ENCODE measurements at regions of chr11 and their contacts with region 1.

Region 1: DNA sequence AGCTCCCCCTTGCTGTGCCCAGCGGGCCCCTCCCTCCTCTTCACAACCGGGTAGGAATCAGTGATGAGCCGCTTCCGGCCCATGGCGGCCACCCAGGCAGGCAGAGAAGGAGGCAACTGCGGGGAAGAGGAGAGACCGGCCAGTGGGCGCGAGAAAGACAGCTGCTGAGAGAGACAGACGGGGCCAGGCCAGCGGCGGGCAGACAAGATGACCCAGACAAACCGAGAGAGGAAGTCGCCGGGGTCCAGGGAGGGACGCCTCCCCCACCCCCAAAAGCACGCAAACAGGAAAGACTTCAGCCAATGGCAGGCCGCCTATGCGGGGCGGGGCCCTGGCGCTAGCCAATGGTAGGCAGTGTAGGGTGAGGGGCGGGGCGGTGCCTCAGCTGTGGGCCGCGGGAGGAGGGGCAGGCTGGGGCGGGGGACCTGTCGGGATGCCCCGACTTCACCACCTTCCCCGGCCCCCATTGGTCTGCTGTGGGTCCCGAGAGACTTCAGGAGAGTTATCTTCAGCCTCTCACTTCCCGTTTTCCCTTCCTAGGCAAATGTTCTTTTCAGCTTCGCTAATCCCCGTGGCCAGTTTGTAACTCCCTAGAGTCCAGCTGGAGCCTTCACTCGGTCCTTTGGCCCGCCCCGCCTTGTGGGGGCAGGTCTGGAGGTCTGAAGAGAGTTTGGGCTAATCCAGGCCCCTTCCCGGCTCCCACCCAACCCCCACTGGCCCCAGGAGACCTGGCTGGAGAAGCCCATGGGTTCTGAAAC is at the start of gene POLD4:
- DNase-seq: peak; percentile 92
- H3K4me3 Mint-ChIP-seq: peak within 1 kb of the TSS; percentile 85
- H3K27ac Mint-ChIP-seq: peak within 1 kb of the TSS; percentile 91
- H3K4me1 Mint-ChIP-seq: peaks cover 58% of the 10 kb centered on the region
- H3K27me3 Mint-ChIP-seq: no peaks in the 10 kb centered on the region
- CTCF ChIP-seq: no peak
- total RNA-seq, gene POLD4: 54.8 and 79.9 TPM in 2 replicates

Region 2: DNA sequence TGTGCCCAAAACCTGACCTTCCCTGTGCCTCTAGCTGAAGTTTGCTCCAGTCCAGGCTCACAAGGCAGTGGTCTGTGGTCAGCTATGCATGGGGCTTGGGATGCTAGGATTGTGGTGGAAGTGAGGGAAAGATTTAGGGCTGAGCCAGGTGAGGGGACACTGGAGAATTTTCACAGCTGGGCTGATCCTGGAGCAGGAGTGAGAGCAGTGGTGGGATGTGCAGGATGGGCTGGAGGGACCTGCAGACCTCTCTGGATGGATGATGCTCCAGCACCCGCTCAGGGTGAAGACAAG is 258.3 kb before region 1 on chr11:
- CTCF ChIA-PET with region 1: no interaction called
- POLR2A ChIA-PET with region 1: no interaction called
- intact Hi-C with region 1: no loop called
- DNase-seq: no peak
- H3K4me3 Mint-ChIP-seq: no peak overlapping the region
- H3K27ac Mint-ChIP-seq: no peak overlapping the region
- H3K4me1 Mint-ChIP-seq: peaks cover 5% of the 10 kb centered on the region
- H3K27me3 Mint-ChIP-seq: no peaks in the 10 kb centered on the region
- CTCF ChIP-seq: no peak

Region 3: GRCh38 chr11:67146516-67147226 is 206.8 kb before region 1 on chr11:
- CTCF ChIA-PET with region 1: no interaction called
- POLR2A ChIA-PET with region 1: no interaction called
- intact Hi-C with region 1: no loop called
- DNase-seq: no peak
- H3K4me3 Mint-ChIP-seq: no peak overlapping the region
- H3K27ac Mint-ChIP-seq: no peak overlapping the region
- H3K4me1 Mint-ChIP-seq: peaks cover 6% of the 10 kb centered on the region
- H3K27me3 Mint-ChIP-seq: no peaks in the 10 kb centered on the region
- CTCF ChIP-seq: no peak

Region 4: DNA sequence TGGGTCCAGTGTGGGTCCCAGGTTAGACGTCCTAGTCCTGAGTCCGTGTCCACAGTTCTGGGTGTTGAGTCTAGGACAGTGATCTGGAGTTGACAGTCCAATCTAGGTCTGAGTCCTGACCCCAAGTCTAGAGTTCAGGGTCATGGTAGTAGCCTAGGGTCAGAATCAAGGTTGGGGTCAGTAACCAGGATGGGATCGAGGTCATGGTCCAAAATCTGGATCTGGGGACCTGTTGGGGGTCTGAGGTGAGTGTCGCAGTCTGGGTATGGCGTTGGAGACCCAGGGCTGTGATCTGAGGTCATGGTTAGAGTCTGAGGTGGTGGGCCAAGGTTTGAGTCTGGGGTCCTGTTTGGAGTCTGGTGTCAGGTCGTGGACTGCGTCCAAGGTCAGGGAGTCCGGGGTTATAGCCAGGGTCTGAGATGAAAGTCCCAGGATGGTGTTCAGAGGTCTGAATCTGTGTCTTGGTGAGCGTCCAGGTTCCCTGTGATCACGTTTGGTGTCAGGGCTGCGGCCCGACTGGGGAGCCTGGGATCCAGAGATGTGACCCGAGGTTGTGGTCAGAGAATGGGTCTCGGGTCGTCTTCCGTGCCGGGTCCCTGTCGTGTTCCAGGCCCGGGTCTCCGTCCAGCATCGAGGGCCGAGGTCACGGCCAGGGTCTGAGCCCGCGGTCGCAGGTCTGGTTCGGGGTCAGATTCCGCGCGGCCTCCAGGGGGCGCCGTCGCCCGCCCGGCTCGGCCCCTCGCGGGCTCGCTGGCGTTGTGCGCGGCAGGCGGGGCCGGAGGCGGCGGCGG is 87.7 kb before region 1 on chr11:
- CTCF ChIA-PET with region 1: interaction called, 5 read pairs
- POLR2A ChIA-PET with region 1: interaction called, 12 read pairs
- intact Hi-C with region 1: no loop called
- DNase-seq: peak; percentile 57
- H3K4me3 Mint-ChIP-seq: peak overlapping the region; percentile 93
- H3K27ac Mint-ChIP-seq: peak overlapping the region; percentile 89
- H3K4me1 Mint-ChIP-seq: peaks cover 33% of the 10 kb centered on the region
- H3K27me3 Mint-ChIP-seq: no peaks in the 10 kb centered on the region
- CTCF ChIP-seq: peak; percentile 57

Region 5: DNA sequence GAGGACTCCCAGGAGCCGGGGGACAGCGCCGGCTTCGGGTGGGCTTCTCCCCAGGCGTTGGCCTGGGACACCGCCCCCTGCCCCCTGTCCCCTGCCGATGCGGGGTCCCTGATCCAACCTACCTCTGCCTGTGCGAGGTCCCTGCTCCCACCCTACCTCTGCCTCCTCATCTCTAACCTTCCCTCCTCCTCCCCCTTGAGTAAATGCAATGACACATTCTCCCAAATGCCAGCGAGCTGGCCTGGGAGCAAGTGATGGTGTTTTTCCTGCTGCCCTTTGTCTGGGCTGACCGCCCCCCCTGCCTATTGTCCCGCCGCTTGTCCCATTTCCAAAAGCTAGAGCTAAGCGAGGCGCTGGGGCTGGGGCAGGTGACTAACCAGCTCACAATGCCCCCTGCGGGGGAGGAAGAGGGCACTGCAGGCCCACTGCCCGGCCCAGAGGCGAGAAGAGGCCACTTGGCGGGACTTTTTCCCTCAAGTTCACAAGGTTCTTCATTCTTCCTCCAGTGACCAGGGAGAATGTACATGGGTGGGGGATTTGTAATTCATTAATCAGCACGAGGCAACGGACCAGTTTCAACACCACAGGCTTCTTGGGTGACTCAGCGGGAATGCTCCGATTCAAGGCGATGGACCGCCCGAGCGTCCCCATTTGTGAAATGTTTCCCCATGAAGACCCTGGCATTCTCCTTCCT is 20.6 kb after region 1 on chr11:
- CTCF ChIA-PET with region 1: interaction called, 659 read pairs
- POLR2A ChIA-PET with region 1: interaction called, 144 read pairs
- intact Hi-C with region 1: loop called (anchors 1 kb)
- DNase-seq: peak; percentile 96
- H3K4me3 Mint-ChIP-seq: peak overlapping the region; percentile 84
- H3K27ac Mint-ChIP-seq: peak overlapping the region; percentile 73
- H3K4me1 Mint-ChIP-seq: peaks cover 41% of the 10 kb centered on the region
- H3K27me3 Mint-ChIP-seq: no peaks in the 10 kb centered on the region
- CTCF ChIP-seq: peak; percentile 34

Region 6: DNA sequence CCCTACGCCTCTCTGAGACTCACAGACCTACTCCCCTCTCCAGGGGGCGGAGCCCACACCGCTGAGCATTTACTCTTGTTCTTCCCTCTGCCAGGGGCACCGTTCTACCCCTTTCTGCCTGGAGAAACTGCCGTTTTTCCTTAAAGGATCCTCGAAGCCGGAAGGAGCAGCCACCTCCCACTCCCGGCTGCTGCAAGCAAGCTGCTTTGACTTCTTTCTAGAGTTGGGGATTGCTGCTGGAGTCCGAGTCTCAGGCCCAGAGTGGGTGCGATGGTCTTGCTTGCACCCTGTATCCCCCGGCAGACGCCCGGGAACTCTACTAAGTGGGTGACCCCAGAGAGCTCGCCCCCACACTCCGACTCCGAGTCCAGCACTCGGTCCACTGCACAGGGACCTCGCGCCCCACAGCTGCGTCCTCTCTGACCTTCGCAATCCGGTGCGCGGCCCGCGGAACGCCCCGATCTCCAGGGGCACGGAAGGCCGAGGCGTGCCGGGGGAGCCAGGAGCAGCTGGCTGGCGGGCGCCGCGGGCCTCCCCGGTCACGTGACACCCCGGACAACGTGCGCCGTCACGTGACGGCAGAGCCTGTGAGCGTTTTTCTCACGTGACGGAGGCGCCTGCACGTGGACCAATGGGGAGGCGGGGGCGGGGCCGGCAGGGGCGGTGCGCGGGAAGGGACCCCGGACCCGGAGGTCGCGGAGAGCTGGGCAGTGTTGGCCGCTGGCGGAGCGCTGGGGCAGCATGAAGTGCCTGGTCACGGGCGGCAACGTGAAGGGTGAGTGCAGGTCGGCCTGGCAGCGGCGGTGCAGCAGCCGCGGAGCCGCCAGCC is 38.0 kb after region 1 on chr11 and contains the start of gene RAD9A:
- CTCF ChIA-PET with region 1: interaction called, 659 read pairs
- POLR2A ChIA-PET with region 1: interaction called, 144 read pairs
- intact Hi-C with region 1: no loop called
- DNase-seq: peak; percentile 92
- H3K4me3 Mint-ChIP-seq: peak within 1 kb of the TSS; percentile 85
- H3K27ac Mint-ChIP-seq: peak within 1 kb of the TSS; percentile 76
- H3K4me1 Mint-ChIP-seq: peaks cover 17% of the 10 kb centered on the region
- H3K27me3 Mint-ChIP-seq: no peaks in the 10 kb centered on the region
- CTCF ChIP-seq: no peak
- total RNA-seq, gene RAD9A: 9.9 and 18.3 TPM in 2 replicates

Region 7: DNA sequence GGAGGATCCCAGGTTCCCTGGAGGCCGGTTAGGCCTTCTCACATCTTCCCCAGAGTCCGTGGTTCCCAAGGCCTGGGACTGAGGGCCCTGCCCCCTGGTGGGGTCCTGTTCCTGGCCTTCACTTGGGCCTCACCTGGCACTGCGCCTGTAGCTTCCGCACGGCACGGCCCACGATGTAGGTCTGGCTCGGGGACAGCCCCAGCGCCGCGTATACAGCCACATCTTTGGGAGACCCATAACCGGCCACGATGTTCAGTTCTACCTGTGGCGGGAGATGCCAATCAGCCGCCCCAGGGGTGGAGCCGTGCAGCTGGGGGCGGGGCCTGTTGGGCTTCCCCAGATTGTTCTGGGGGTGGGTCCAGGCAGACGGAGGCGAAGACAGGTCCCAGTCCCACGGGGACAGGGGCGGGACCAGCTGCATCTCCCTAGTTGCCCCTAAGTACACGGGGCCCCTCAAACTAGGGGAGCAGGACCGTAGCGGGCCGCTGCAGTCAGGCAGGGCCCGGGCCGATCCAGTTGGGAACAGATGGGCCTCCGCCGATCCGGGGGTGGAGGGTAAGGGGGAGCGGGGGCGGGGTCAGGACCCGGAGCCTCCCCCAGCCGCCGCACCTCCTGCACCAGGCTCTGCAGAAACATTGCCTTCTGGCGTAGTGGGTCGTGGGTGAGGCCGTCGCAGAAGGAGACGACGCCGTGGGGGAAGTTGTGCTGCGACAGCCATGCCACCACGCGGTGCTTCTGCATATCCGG is 139.5 kb after region 1 on chr11:
- CTCF ChIA-PET with region 1: no interaction called
- POLR2A ChIA-PET with region 1: no interaction called
- intact Hi-C with region 1: no loop called
- DNase-seq: no peak
- H3K4me3 Mint-ChIP-seq: no peak overlapping the region
- H3K27ac Mint-ChIP-seq: no peak overlapping the region
- H3K4me1 Mint-ChIP-seq: no peaks in the 10 kb centered on the region
- H3K27me3 Mint-ChIP-seq: no peaks in the 10 kb centered on the region
- CTCF ChIP-seq: no peak

Region 8: GRCh38 chr11:67507864-67508485 is 154.5 kb after region 1 on chr11 and contains the start of gene CDK2AP2:
- CTCF ChIA-PET with region 1: no interaction called
- POLR2A ChIA-PET with region 1: no interaction called
- intact Hi-C with region 1: loop called (anchors 1 kb)
- DNase-seq: peak; percentile 99
- H3K4me3 Mint-ChIP-seq: peak within 1 kb of the TSS; percentile 92
- H3K27ac Mint-ChIP-seq: peak within 1 kb of the TSS; percentile 89
- H3K4me1 Mint-ChIP-seq: peaks cover 20% of the 10 kb centered on the region
- H3K27me3 Mint-ChIP-seq: no peaks in the 10 kb centered on the region
- CTCF ChIP-seq: no peak
- total RNA-seq, gene CDK2AP2: 93.7 and 136 TPM in 2 replicates

Measured in MCF 10A (cell line).